B cell (primary cell): ENCODE measurements at regions of chr12 and their contacts with region 1.

Region 1: DNA sequence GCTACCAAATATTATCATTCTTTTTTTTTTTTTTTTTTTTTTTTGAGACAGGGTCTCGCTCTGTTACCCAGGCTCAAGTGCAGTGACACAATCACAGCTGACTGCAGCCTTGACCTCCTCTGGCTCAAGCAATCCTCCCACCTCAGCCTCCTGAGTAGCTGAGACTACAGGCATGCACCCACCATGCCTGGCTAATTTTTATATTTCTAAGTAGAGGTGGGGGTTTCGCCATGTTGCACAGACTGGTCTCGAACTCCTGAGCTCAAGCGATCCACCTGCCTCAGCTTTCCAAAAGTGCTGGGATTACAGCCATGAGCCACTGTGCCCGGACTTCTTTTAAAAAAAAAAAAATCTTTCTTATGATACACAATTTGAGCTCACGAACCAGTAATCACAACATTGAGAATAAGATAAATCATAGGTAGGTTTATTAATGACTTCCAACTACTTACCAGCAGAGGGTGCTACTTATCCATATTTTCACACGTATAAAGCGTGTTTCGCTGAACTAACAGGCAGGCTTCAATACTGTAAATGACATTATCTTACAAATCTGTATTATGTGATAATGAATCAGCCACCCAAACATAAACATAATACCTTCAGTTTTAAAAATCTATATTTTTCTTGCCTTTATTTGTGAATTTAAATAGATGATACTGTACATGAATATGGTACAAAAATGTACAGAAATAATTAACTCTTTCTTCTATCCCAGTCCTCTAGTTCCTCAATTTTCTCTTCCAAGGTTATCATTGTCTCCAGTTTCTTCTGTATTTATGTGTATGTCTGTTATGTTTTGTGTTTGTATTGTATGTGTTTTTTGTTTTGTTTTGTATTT is 42.5 kb upstream of the BCAT1 start:
- DNase-seq: peak; percentile 82
- ATAC-seq: peak; percentile 74
- H3K4me3 ChIP-seq: no peak overlapping the region
- H3K4me3 Mint-ChIP-seq: no peak overlapping the region
- H3K27ac ChIP-seq: no peak overlapping the region
- H3K27ac Mint-ChIP-seq: no peak overlapping the region
- H3K4me1 ChIP-seq: peaks cover 28 to 37% of the 10 kb centered on the region in 2 donors
- H3K4me1 Mint-ChIP-seq: peaks cover 35% of the 10 kb centered on the region
- H3K27me3 ChIP-seq: no peaks in the 10 kb centered on the region
- H3K27me3 Mint-ChIP-seq: no peaks in the 10 kb centered on the region
- CTCF ChIP-seq: peak; percentile 82

Region 2: GRCh38 chr12:25041006-25041741 is 49.7 kb after region 1 on chr12:
- CTCF ChIA-PET with region 1: interaction called, 19 read pairs
- POLR2A ChIA-PET with region 1: no interaction called
- intact Hi-C with region 1: no loop called
- DNase-seq: no peak
- ATAC-seq: no peak
- H3K4me3 ChIP-seq: no peak overlapping the region
- H3K4me3 Mint-ChIP-seq: peak overlapping the region; percentile 33
- H3K27ac ChIP-seq: no peak overlapping the region
- H3K27ac Mint-ChIP-seq: peak overlapping the region; percentile 28
- H3K4me1 ChIP-seq: peaks cover 10 to 21% of the 10 kb centered on the region in 2 donors
- H3K4me1 Mint-ChIP-seq: peaks cover 31% of the 10 kb centered on the region
- H3K27me3 ChIP-seq: no peaks in the 10 kb centered on the region
- H3K27me3 Mint-ChIP-seq: no peaks in the 10 kb centered on the region
- CTCF ChIP-seq: no peak

Region 3: GRCh38 chr12:25107920-25108319 is 116.5 kb after region 1 on chr12:
- CTCF ChIA-PET with region 1: interaction called, 13 read pairs
- POLR2A ChIA-PET with region 1: no interaction called
- intact Hi-C with region 1: no loop called
- DNase-seq: no peak
- ATAC-seq: no peak
- H3K4me3 ChIP-seq: no peak overlapping the region
- H3K4me3 Mint-ChIP-seq: no peak overlapping the region
- H3K27ac ChIP-seq: peak overlapping the region in 1 of 2 donors; percentile 67
- H3K27ac Mint-ChIP-seq: peak overlapping the region; percentile 71
- H3K4me1 ChIP-seq: peaks cover 5 to 6% of the 10 kb centered on the region in 2 donors
- H3K4me1 Mint-ChIP-seq: peaks cover 12% of the 10 kb centered on the region
- H3K27me3 ChIP-seq: no peaks in the 10 kb centered on the region
- H3K27me3 Mint-ChIP-seq: no peaks in the 10 kb centered on the region
- CTCF ChIP-seq: no peak

Region 4: GRCh38 chr12:25130741-25131188 is 139.3 kb after region 1 on chr12:
- CTCF ChIA-PET with region 1: interaction called, 172 read pairs
- POLR2A ChIA-PET with region 1: no interaction called
- intact Hi-C with region 1: loop called (anchors 1 kb)
- DNase-seq: peak; percentile 63
- ATAC-seq: peak; percentile 43
- H3K4me3 ChIP-seq: no peak overlapping the region
- H3K4me3 Mint-ChIP-seq: no peak overlapping the region
- H3K27ac ChIP-seq: no peak overlapping the region
- H3K27ac Mint-ChIP-seq: no peak overlapping the region
- H3K4me1 ChIP-seq: peaks cover 6 to 7% of the 10 kb centered on the region in 2 donors
- H3K4me1 Mint-ChIP-seq: peaks cover 10% of the 10 kb centered on the region
- H3K27me3 ChIP-seq: no peaks in the 10 kb centered on the region
- H3K27me3 Mint-ChIP-seq: no peaks in the 10 kb centered on the region
- CTCF ChIP-seq: peak; percentile 85